Caco-2 (cell line): ENCODE measurements at regions of chr7 and their contacts with region 1.

Region 1: GRCh38 chr7:81064426-81064825 is 145.6 kb upstream of the SEMA3C start:
- DNase-seq: no peak
- H3K4me3 ChIP-seq: no peak overlapping the region
- H3K4me3 Mint-ChIP-seq: no peak overlapping the region
- H3K27ac Mint-ChIP-seq: peak overlapping the region; percentile 77
- H3K4me1 ChIP-seq: peaks cover 5% of the 10 kb centered on the region
- H3K4me1 Mint-ChIP-seq: peaks cover 19% of the 10 kb centered on the region
- H3K27me3 ChIP-seq: no peaks in the 10 kb centered on the region
- H3K27me3 Mint-ChIP-seq: no peaks in the 10 kb centered on the region
- CTCF ChIP-seq: no peak

Region 2: DNA sequence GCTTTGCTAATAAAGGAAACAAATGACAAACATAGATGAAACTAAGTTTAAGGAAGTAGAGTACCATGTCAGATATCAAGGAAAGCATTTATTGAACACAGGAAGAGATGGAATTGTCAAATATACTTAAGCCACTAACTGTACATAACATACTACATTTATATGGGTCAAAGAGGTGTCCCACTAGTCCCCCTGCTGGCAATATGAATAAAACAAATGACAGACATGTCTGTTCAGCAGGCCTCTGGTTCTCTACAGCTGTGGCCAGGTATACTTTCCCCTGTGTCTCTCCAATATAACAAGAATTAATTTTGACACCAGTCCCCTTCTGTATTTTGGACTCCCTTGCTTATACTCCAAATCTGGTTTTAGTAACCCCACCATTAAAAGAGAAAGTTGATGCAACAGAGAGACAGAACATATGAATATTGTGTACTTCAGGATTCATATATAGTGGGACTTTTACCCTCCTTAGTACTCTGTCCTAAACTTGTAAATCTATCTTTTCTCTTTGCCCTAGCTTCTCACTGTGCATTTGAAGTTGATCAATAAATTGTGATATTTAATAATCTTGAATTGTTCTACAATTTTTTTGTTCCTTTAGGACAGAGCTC is 383.0 kb before region 1 on chr7:
- CTCF ChIA-PET with region 1: no interaction called
- POLR2A ChIA-PET with region 1: no interaction called
- intact Hi-C with region 1: no loop called
- DNase-seq: peak in 1 of 2 experiments; percentile 40
- H3K4me3 ChIP-seq: no peak overlapping the region
- H3K4me3 Mint-ChIP-seq: no peak overlapping the region
- H3K27ac Mint-ChIP-seq: no peak overlapping the region
- H3K4me1 ChIP-seq: no peaks in the 10 kb centered on the region; the same call in none of the 2 replicates
- H3K4me1 Mint-ChIP-seq: no peaks in the 10 kb centered on the region
- H3K27me3 ChIP-seq: no peaks in the 10 kb centered on the region
- H3K27me3 Mint-ChIP-seq: no peaks in the 10 kb centered on the region
- CTCF ChIP-seq: peak; percentile 44 to 52

Region 3: GRCh38 chr7:81094952-81095351 is 30.5 kb after region 1 on chr7:
- CTCF ChIA-PET with region 1: no interaction called
- POLR2A ChIA-PET with region 1: no interaction called
- intact Hi-C with region 1: no loop called
- DNase-seq: no peak
- H3K4me3 ChIP-seq: no peak overlapping the region
- H3K4me3 Mint-ChIP-seq: no peak overlapping the region
- H3K27ac Mint-ChIP-seq: no peak overlapping the region
- H3K4me1 ChIP-seq: peaks cover 4% of the 10 kb centered on the region; the same call in 1 of the 2 replicates
- H3K4me1 Mint-ChIP-seq: no peaks in the 10 kb centered on the region
- H3K27me3 ChIP-seq: no peaks in the 10 kb centered on the region
- H3K27me3 Mint-ChIP-seq: no peaks in the 10 kb centered on the region
- CTCF ChIP-seq: no peak

Region 4: GRCh38 chr7:81457852-81458522 is 393.6 kb after region 1 on chr7:
- CTCF ChIA-PET with region 1: no interaction called
- POLR2A ChIA-PET with region 1: no interaction called
- intact Hi-C with region 1: loop called (anchors 10 kb)
- DNase-seq: no peak
- H3K4me3 ChIP-seq: no peak overlapping the region
- H3K4me3 Mint-ChIP-seq: no peak overlapping the region
- H3K27ac Mint-ChIP-seq: no peak overlapping the region
- H3K4me1 ChIP-seq: 0 out of 2 replicates have a peak, but pooled peaks cover 3% of the 10 kb centered on the region
- H3K4me1 Mint-ChIP-seq: peaks cover 11% of the 10 kb centered on the region
- H3K27me3 ChIP-seq: no peaks in the 10 kb centered on the region
- H3K27me3 Mint-ChIP-seq: no peaks in the 10 kb centered on the region
- CTCF ChIP-seq: peak; percentile 23 to 49